ENCODE measurements at regions of chr13 and their contacts with region 1.

Region 1: DNA sequence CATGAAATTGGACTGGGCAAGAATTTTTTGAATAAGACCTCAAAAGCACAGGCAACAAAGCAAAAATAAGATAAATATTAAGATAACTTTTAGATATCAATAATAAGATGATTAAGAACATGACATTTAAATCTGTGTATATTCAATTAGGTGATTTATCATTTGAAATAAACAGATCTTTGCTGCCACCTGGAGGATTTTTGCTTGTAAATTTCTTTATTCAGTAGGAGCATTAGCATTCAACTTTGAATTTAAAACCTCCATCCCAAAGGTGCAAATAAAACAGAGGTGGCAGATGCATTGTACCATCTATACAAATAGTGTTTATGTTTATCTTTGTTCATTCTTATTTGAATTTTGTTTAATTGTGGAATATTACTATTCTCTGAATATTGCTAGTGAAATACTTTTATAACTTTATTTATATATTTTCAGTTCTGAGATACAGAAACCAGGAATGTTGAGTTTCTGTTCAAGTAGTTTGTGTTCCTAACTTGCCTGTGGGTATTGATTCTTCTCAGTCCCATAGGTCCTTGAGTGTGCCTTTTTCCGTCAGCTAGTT is 20.9 kb downstream of the COG6 start:
- DNase-seq: no peak
- H3K4me3 ChIP-seq: no peak overlapping the region
- H3K27ac ChIP-seq: no peak overlapping the region
- H3K4me1 ChIP-seq: no peaks in the 10 kb centered on the region
- H3K27me3 ChIP-seq: no peaks in the 10 kb centered on the region
- CTCF ChIP-seq: peak in 2 of 3 experiments; percentile 37 to 52

Region 2: DNA sequence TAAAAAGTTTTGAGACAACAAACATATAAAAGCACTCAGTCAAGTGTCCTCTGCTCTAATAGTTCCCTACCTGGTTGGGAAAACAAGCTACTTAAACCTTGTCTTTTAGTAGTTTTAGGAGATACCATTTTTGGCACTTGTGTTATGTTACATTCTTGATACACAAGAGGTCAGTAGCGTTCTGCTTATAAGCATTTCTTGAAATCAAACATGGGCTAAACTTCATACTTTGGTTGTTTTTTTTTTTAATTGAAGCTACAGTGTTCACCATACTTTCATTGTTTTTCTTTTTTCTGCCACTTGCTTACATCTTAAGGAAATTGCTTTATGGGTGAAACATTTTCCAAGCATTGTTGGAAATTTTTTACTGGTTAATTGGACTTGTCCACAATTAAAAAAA is 625.2 kb before region 1 on chr13:
- intact Hi-C with region 1: loop called (anchors 5 kb)
- DNase-seq: no peak
- H3K4me3 ChIP-seq: no peak overlapping the region
- H3K27ac ChIP-seq: no peak overlapping the region
- H3K4me1 ChIP-seq: no peaks in the 10 kb centered on the region
- H3K27me3 ChIP-seq: no peaks in the 10 kb centered on the region
- CTCF ChIP-seq: peak in 2 of 3 experiments; percentile 31 to 46

Region 3: DNA sequence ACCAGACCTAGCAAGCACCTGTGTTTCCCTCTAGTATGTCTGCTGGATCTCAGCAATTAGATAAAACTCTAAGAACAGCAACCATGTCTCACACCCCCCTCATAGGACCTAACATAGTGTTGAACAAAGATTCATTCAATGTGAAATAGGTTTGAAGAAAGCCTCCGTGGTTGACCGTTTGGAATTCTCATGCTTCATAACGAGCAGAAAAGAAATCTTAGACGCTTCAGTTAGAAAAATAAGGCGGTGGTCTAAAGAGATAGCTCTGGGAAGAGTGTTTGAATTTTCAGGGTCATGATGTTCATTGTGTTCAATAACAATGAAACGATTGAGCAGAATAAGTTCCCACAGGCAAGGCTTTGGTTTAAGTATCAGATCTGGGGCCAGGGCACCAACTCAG is 312.0 kb after region 1 on chr13:
- intact Hi-C with region 1: no loop called
- DNase-seq: no peak
- H3K4me3 ChIP-seq: no peak overlapping the region
- H3K27ac ChIP-seq: no peak overlapping the region
- H3K4me1 ChIP-seq: no peaks in the 10 kb centered on the region
- H3K27me3 ChIP-seq: no peaks in the 10 kb centered on the region
- CTCF ChIP-seq: no peak

Region 4: GRCh38 chr13:40002016-40002415 is 325.6 kb after region 1 on chr13:
- intact Hi-C with region 1: no loop called
- DNase-seq: no peak
- H3K4me3 ChIP-seq: no peak overlapping the region
- H3K27ac ChIP-seq: no peak overlapping the region
- H3K4me1 ChIP-seq: no peaks in the 10 kb centered on the region
- H3K27me3 ChIP-seq: no peaks in the 10 kb centered on the region
- CTCF ChIP-seq: no peak